Lower leg skin (tissue), 4 donors: ENCODE measurements at regions of chr1 and their contacts with region 1.

Region 1: GRCh38 chr1:55138823-55139222 is 76.3 kb downstream of the USP24 start:
- DNase-seq: no peak
- H3K4me3 ChIP-seq: no peak overlapping the region
- CTCF ChIP-seq: no peak
- POLR2A ChIP-seq: no peak

Region 2: DNA sequence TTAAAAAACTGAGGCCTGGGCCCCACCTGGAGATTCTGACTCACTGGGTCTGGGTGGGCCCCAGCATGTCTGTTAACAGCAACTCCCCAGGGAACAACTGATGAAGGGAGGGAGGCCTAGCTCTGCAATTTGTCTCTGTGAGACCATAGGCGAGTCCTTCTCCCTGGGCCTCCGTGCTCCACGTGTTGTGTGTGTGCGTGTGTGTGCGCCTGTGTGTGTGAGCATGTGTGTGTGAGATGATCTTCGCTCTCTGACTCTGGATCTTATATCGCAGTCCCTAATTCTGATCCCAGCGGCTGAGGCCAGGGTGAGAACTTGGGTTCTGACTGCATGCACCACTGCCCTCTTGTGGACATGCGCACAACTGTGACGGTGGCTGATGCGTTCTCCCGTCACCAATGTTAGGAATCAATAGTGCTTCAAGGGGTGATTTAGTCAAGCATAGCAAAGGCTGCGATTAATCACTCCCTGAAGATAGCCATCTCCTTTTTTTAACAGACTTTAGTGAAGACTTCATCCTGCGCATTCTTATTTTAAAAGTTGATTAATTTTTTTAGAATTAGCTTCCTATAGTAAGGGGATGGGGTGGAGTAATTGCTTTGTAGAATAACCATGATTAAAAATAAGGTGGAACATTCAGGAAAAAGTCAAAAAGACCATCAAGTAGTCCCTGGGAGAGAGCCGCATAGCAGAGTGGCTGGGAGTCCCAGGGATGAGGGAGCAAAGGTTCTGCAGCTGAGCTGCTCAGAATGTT is 138.7 kb after region 1 on chr1:
- intact Hi-C with region 1: loop called (anchors 5 kb)
- DNase-seq: peak; percentile 76 to 95
- H3K4me3 ChIP-seq: no peak overlapping the region
- CTCF ChIP-seq: peak in 1 of 3 donors; percentile 37
- POLR2A ChIP-seq: no peak

Region 3: GRCh38 chr1:56156971-56157876 is 1018.4 kb after region 1 on chr1:
- intact Hi-C with region 1: no loop called
- DNase-seq: no peak
- H3K4me3 ChIP-seq: no peak overlapping the region
- CTCF ChIP-seq: no peak
- POLR2A ChIP-seq: no peak